ENCODE measurements at regions of chr14 and their contacts with region 1.

Region 1: GRCh38 chr14:45526715-45527549 is 273.9 kb upstream of the MIS18BP1 start:
- DNase-seq: no peak
- ATAC-seq: peak in 3 of 4 donors; percentile 54 to 71 (median 57)
- H3K4me3 ChIP-seq: no peak overlapping the region
- H3K27ac ChIP-seq: no peak overlapping the region
- H3K4me1 ChIP-seq: no peaks in the 10 kb centered on the region
- H3K27me3 ChIP-seq: no peaks in the 10 kb centered on the region
- CTCF ChIP-seq: peak; percentile 24 to 56 (median 47)
- POLR2A ChIP-seq: no peak

Region 2: GRCh38 chr14:45112889-45113781 is 413.8 kb before region 1 on chr14:
- intact Hi-C with region 1: no loop called
- DNase-seq: no peak
- ATAC-seq: no peak
- H3K4me3 ChIP-seq: no peak overlapping the region
- H3K27ac ChIP-seq: no peak overlapping the region
- H3K4me1 ChIP-seq: no peaks in the 10 kb centered on the region
- H3K27me3 ChIP-seq: no peaks in the 10 kb centered on the region
- CTCF ChIP-seq: no peak
- POLR2A ChIP-seq: no peak

Region 3: DNA sequence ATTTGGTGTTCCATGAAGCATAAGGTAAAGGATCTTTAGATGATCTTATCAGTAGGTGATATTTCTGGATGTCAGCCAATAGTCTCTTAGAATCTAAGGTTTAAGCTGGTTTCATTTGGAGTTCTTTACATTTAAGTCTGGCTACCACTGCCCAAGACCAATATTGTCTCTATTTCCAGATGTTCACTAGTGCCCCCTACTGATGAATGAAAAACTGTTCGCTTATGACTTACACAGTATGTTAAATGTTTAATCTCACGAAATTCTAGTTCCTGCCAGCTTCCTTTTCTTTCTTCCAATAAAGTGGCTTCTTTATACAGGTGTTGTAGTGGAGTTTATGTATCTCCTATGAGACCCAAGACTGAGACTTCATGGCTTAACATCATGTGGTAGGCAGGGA is 242.1 kb before region 1 on chr14:
- intact Hi-C with region 1: loop called in 1 of 10 experiments (anchors 10 kb)
- DNase-seq: no peak
- ATAC-seq: no peak
- H3K4me3 ChIP-seq: no peak overlapping the region
- H3K27ac ChIP-seq: no peak overlapping the region
- H3K4me1 ChIP-seq: no peaks in the 10 kb centered on the region
- H3K27me3 ChIP-seq: no peaks in the 10 kb centered on the region
- CTCF ChIP-seq: peak in 1 of 12 donors; percentile 11
- POLR2A ChIP-seq: no peak

Region 4: GRCh38 chr14:45377166-45377565 is 149.8 kb before region 1 on chr14:
- intact Hi-C with region 1: no loop called
- DNase-seq: no peak
- ATAC-seq: no peak
- H3K4me3 ChIP-seq: no peak overlapping the region
- H3K27ac ChIP-seq: no peak overlapping the region
- H3K4me1 ChIP-seq: no peaks in the 10 kb centered on the region
- H3K27me3 ChIP-seq: no peaks in the 10 kb centered on the region
- CTCF ChIP-seq: no peak
- POLR2A ChIP-seq: no peak

Region 5: GRCh38 chr14:45426670-45427282 is 100.2 kb before region 1 on chr14:
- intact Hi-C with region 1: loop called (anchors 1 to 5 kb)
- DNase-seq: no peak
- ATAC-seq: peak in 2 of 4 donors; percentile 45 to 59
- H3K4me3 ChIP-seq: no peak overlapping the region
- H3K27ac ChIP-seq: no peak overlapping the region
- H3K4me1 ChIP-seq: peaks cover 0 to 3% (median 0%) of the 10 kb centered on the region in 12 donors
- H3K27me3 ChIP-seq: no peaks in the 10 kb centered on the region
- CTCF ChIP-seq: peak; percentile 47 to 76 (median 64)
- POLR2A ChIP-seq: no peak

Region 6: DNA sequence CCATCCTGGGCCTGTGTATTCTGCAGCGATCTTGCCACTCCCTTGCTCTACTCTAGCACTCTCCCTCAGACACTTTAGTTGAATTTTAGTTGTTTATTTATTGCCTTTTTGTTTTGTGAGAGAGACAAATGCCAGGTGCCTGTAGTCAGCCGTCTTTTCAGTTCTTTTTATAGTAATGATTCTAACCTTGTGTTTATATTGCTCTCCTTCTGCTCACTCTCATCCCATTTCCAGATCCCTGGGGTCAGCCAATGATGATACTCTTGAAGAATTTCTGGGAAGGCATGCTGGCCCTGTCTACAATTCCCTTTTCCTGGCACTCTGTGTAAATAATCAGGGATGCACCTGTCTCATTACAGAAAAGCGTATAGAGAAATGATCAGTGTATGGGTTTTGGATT is 60.2 kb after region 1 on chr14:
- intact Hi-C with region 1: no loop called
- DNase-seq: no peak
- ATAC-seq: no peak
- H3K4me3 ChIP-seq: no peak overlapping the region
- H3K27ac ChIP-seq: peak overlapping the region in 1 of 12 donors; percentile 58
- H3K4me1 ChIP-seq: no peaks in the 10 kb centered on the region
- H3K27me3 ChIP-seq: no peaks in the 10 kb centered on the region
- CTCF ChIP-seq: no peak
- POLR2A ChIP-seq: no peak

Measured in heart left ventricle (tissue), 16 donors.